B cell (primary cell): ENCODE measurements at regions of chr10 and their contacts with region 1.

Region 1: GRCh38 chr10:110414563-110415309 is 83.0 kb upstream of the DUSP5 start:
- DNase-seq: peak; percentile 92
- ATAC-seq: peak; percentile 92
- H3K4me3 ChIP-seq: peak overlapping the region in 1 of 5 experiments; percentile 11
- H3K4me3 Mint-ChIP-seq: peak overlapping the region; percentile 60
- H3K27ac ChIP-seq: no peak overlapping the region
- H3K27ac Mint-ChIP-seq: peak overlapping the region; percentile 76
- H3K4me1 ChIP-seq: peaks cover 57 to 74% of the 10 kb centered on the region in 2 donors
- H3K4me1 Mint-ChIP-seq: peaks cover 69% of the 10 kb centered on the region
- H3K27me3 ChIP-seq: peaks cover 0 to 28% (median 7%) of the 10 kb centered on the region in 4 experiments
- H3K27me3 Mint-ChIP-seq: peaks cover 13% of the 10 kb centered on the region
- CTCF ChIP-seq: no peak

Region 2: DNA sequence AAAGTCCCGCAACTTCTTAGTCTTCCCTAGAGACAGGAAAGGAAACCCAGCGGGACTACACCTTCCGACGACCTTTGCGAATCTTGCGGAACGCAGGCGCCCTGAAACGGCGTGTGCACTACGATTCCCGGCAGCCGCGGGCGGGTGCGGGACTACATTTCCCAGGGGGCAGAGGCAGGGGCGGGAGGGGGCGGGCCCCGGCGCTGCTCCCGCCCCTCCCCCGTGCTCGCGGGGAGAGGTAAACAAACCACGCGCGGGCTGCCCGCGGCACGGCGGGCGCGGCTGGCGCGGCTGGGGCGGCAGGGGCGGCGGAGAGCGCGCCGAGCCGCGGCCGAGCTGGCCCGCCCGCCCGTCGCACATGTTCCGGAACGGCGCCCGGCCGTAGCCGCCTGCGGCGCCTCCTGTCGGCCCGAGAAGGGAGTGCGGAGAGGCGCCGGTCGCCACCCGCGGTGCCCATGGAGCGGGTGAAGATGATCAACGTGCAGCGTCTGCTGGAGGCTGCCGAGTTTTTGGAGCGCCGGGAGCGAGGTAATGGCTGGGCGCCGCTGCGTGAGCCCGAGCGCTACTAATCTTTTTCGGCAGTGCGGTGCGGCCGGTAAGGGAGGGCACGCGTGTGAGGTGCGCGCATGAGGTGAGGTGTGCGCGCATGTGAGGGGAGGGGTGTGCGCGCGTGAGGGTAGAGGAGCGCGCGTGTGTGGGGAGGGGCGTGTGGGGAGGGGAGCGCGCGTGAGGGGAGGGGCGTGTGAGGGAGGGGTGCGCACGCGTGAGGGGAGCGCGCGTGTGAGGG is 188.8 kb before region 1 on chr10:
- CTCF ChIA-PET with region 1: no interaction called
- POLR2A ChIA-PET with region 1: interaction called, 11 read pairs
- intact Hi-C with region 1: loop called (anchors 5 kb)
- DNase-seq: peak; percentile 95
- ATAC-seq: peak; percentile 53
- H3K4me3 ChIP-seq: peak overlapping the region; percentile 42 to 90 (median 77)
- H3K4me3 Mint-ChIP-seq: peak overlapping the region; percentile 97
- H3K27ac ChIP-seq: peak overlapping the region; percentile 79 to 84
- H3K27ac Mint-ChIP-seq: peak overlapping the region; percentile 97
- H3K4me1 ChIP-seq: peaks cover 22 to 25% of the 10 kb centered on the region in 2 donors
- H3K4me1 Mint-ChIP-seq: peaks cover 38% of the 10 kb centered on the region
- H3K27me3 ChIP-seq: peaks cover 0 to 5% (median 2%) of the 10 kb centered on the region in 4 experiments
- H3K27me3 Mint-ChIP-seq: peaks cover 3% of the 10 kb centered on the region
- CTCF ChIP-seq: peak; percentile 65

Region 3: DNA sequence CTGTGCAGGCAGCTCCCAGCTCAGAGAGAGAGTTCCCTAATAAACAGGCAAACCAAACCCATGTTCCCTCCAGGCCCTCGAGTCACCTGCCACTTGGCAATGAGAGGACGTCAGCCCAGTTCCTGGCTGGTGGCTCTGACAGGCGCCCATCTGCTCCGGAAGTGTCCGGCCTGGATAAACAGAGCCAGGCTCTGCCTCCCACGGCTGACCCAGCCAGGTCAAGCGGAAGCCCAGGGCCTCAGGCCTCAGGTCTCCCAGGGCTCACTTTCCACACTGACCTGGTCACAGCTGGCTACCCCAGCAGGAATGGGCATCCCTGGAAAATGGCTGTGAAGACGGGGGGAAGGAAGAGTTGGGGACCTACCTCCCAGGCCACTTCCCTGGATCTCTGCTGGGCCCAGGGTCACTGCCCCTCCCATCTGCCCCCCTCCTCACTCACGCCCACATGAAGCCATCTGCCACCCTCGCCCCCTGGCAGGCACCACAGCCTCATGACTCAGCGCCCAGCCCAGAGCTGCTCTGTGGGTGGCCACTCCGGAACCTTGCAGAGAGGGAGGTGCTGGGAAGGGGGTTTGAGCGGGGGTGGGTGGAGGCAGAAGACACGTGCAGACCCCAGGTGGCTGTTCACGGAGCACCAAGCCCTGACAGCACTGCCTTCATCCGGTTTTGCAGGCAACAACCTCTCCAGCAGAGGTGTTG is 45.5 kb after region 1 on chr10:
- CTCF ChIA-PET with region 1: interaction called, 3 read pairs
- POLR2A ChIA-PET with region 1: interaction called, 6 read pairs
- intact Hi-C with region 1: loop called (anchors 5 kb)
- DNase-seq: peak; percentile 53
- ATAC-seq: peak; percentile 68
- H3K4me3 ChIP-seq: no peak overlapping the region
- H3K4me3 Mint-ChIP-seq: peak overlapping the region; percentile 65
- H3K27ac ChIP-seq: peak overlapping the region in 1 of 2 donors; percentile 45
- H3K27ac Mint-ChIP-seq: peak overlapping the region; percentile 86
- H3K4me1 ChIP-seq: peaks cover 72 to 74% of the 10 kb centered on the region in 2 donors
- H3K4me1 Mint-ChIP-seq: peaks cover 73% of the 10 kb centered on the region
- H3K27me3 ChIP-seq: no peaks in the 10 kb centered on the region
- H3K27me3 Mint-ChIP-seq: peaks cover 8% of the 10 kb centered on the region
- CTCF ChIP-seq: no peak

Region 4: GRCh38 chr10:110502851-110503301 is 88.1 kb after region 1 on chr10:
- CTCF ChIA-PET with region 1: interaction called, 16 read pairs
- POLR2A ChIA-PET with region 1: interaction called, 11 read pairs
- intact Hi-C with region 1: loop called (anchors 1 kb)
- DNase-seq: peak; percentile 87
- ATAC-seq: peak; percentile 51
- H3K4me3 ChIP-seq: peak overlapping the region in 1 of 5 experiments; percentile 45
- H3K4me3 Mint-ChIP-seq: peak overlapping the region; percentile 85
- H3K27ac ChIP-seq: peak overlapping the region; percentile 82 to 87
- H3K27ac Mint-ChIP-seq: peak overlapping the region; percentile 90
- H3K4me1 ChIP-seq: peaks cover 54 to 63% of the 10 kb centered on the region in 2 donors
- H3K4me1 Mint-ChIP-seq: peaks cover 67% of the 10 kb centered on the region
- H3K27me3 ChIP-seq: peaks cover 0 to 11% (median 2%) of the 10 kb centered on the region in 4 experiments
- H3K27me3 Mint-ChIP-seq: peaks cover 6% of the 10 kb centered on the region
- CTCF ChIP-seq: no peak

Region 5: DNA sequence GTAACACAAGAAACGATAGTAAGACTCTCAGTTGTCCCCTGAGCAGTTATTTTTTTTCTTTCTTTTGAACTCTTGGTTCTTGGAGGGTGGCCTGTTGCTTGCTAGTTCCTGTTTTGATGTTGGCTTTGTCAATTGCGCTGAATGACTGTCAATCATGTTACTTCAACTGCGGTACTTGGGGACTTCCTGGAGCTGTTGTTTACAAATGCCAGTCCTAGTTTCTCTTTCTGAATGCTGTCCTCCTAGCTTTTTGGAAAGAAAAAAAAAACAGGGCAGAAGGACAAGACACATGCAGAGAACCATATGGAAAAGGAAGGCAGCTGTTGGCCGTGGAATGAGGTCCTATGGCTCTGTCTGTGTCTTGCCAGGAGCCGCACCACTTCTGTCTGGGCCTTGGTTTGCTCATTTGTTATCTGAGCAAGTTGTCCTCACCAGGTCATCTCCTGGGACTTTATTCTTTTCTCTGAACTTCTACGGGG is 450.0 kb after region 1 on chr10:
- CTCF ChIA-PET with region 1: no interaction called
- POLR2A ChIA-PET with region 1: no interaction called
- intact Hi-C with region 1: loop called (anchors 1 kb)
- DNase-seq: peak; percentile 89
- ATAC-seq: peak; percentile 55
- H3K4me3 ChIP-seq: peak overlapping the region in 4 of 5 experiments; percentile 21 to 60 (median 38)
- H3K4me3 Mint-ChIP-seq: peak overlapping the region; percentile 85
- H3K27ac ChIP-seq: peak overlapping the region; percentile 94 to 96
- H3K27ac Mint-ChIP-seq: peak overlapping the region; percentile 97
- H3K4me1 ChIP-seq: peaks cover 97 to 100% of the 10 kb centered on the region in 2 donors
- H3K4me1 Mint-ChIP-seq: peaks cover 97% of the 10 kb centered on the region
- H3K27me3 ChIP-seq: no peaks in the 10 kb centered on the region
- H3K27me3 Mint-ChIP-seq: no peaks in the 10 kb centered on the region
- CTCF ChIP-seq: no peak